Mammary epithelial cell (primary cell): ENCODE measurements at regions of chr4 and their contacts with region 1.

Region 1: GRCh38 chr4:15893962-15894361 is 44.6 kb downstream of the FGFBP1 start:
- DNase-seq: peak; percentile 99
- H3K4me3 ChIP-seq: no peak overlapping the region
- H3K27ac ChIP-seq: peak overlapping the region; percentile 99
- H3K4me1 ChIP-seq: peaks cover 43% of the 10 kb centered on the region
- H3K27me3 ChIP-seq: no peaks in the 10 kb centered on the region
- CTCF ChIP-seq: no peak

Region 2: GRCh38 chr4:15231265-15232091 is 662.5 kb before region 1 on chr4:
- CTCF ChIA-PET with region 1: interaction called, 18 read pairs
- dilution Hi-C with region 1: no loop called
- in situ Hi-C with region 1: no loop called
- intact Hi-C with region 1: no loop called
- DNase-seq: peak; percentile 68
- H3K4me3 ChIP-seq: no peak overlapping the region
- H3K27ac ChIP-seq: no peak overlapping the region
- H3K4me1 ChIP-seq: peaks cover 30% of the 10 kb centered on the region
- H3K27me3 ChIP-seq: peaks cover 2% of the 10 kb centered on the region
- CTCF ChIP-seq: peak; percentile 69 to 76

Region 3: DNA sequence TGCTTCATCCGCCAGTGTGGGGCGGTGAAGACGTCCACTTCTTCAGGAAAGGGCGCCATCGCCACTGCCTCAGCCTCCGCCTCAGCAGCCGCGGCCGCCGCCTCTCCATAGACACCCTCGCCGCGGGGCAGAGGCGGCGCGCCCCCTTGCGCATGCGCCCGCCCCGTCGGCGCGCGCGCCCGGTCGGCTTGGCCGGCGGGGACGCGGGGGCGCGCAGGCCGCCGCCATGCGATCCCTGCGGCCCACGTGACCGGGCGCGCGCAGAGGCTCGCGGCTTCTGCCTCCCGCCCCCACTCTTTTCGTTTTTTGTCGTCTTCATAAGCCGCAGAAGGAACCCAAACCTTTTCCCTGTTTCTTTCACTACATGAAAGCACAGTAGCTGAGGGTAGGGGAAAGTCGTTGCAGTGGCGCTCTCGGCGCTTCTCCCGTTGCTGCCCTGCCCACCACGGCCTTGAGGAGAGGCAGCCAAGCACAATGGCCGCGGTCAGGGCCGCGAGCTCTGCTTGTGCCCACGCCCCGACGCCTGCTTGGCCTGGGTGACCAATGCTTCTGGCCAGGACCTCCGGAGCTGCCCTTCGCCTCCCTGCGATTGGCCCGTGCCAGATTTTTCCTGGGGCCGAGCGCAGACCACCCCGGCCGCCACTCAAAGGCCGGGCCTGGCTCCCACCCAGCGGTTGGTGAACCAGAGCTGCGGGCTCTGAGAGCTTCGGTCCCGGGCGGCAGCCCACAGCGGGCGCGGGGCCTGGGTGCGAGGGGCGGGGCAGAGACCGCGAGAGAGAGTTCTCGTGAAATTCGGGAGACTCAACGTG is 238.5 kb before region 1 on chr4 and contains the start of gene FBXL5:
- CTCF ChIA-PET with region 1: no interaction called
- dilution Hi-C with region 1: no loop called
- in situ Hi-C with region 1: no loop called
- intact Hi-C with region 1: loop called (anchors 10 kb)
- DNase-seq: peak; percentile 82
- H3K4me3 ChIP-seq: peak within 1 kb of the TSS; percentile 82 to 93 (median 86)
- H3K27ac ChIP-seq: peak within 1 kb of the TSS; percentile 88
- H3K4me1 ChIP-seq: peaks cover 27% of the 10 kb centered on the region
- H3K27me3 ChIP-seq: no peaks in the 10 kb centered on the region
- CTCF ChIP-seq: no peak
- total RNA-seq, gene FBXL5: 72.1 to 109 TPM

Region 4: GRCh38 chr4:15906024-15906443 is 12.1 kb after region 1 on chr4:
- CTCF ChIA-PET with region 1: no interaction called
- dilution Hi-C with region 1: no loop called
- in situ Hi-C with region 1: no loop called
- intact Hi-C with region 1: loop called (anchors 1 kb)
- DNase-seq: peak; percentile 100
- H3K4me3 ChIP-seq: no peak overlapping the region
- H3K27ac ChIP-seq: peak overlapping the region; percentile 99
- H3K4me1 ChIP-seq: peaks cover 26% of the 10 kb centered on the region
- H3K27me3 ChIP-seq: no peaks in the 10 kb centered on the region
- CTCF ChIP-seq: peak in 1 of 2 donors; percentile 9

Region 5: GRCh38 chr4:15913631-15913970 is 19.6 kb after region 1 on chr4:
- CTCF ChIA-PET with region 1: no interaction called
- dilution Hi-C with region 1: no loop called
- in situ Hi-C with region 1: no loop called
- intact Hi-C with region 1: loop called (anchors 1 kb)
- DNase-seq: peak; percentile 99
- H3K4me3 ChIP-seq: no peak overlapping the region
- H3K27ac ChIP-seq: peak overlapping the region; percentile 100
- H3K4me1 ChIP-seq: peaks cover 65% of the 10 kb centered on the region
- H3K27me3 ChIP-seq: no peaks in the 10 kb centered on the region
- CTCF ChIP-seq: no peak

Region 6: GRCh38 chr4:15920723-15921591 is 27.0 kb after region 1 on chr4:
- CTCF ChIA-PET with region 1: no interaction called
- dilution Hi-C with region 1: no loop called
- in situ Hi-C with region 1: no loop called
- intact Hi-C with region 1: loop called (anchors 1 kb)
- DNase-seq: peak; percentile 93
- H3K4me3 ChIP-seq: no peak overlapping the region
- H3K27ac ChIP-seq: peak overlapping the region; percentile 89
- H3K4me1 ChIP-seq: peaks cover 42% of the 10 kb centered on the region
- H3K27me3 ChIP-seq: no peaks in the 10 kb centered on the region
- CTCF ChIP-seq: no peak

Region 7: DNA sequence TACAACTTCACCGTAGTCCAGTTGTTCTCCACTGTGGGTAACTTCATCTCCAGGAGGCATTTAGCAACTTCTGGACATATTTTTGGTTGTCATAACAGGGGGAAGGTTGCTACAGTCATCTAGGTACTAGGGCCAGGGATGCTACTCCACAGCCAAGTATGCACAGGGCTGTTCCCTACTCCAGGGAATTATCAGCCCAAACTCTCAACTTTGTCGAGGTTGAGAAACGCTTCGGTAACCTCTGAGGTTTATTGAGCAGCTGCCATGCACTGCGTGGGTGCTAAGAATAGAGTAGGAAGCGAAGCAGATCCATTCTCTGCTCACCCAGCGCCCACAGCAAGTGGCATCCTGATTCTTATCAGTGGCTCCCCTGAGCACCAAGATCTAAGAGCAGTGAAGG is 36.4 kb after region 1 on chr4:
- CTCF ChIA-PET with region 1: no interaction called
- dilution Hi-C with region 1: no loop called
- in situ Hi-C with region 1: loop called in 1 of 2 experiments (anchors 5 kb)
- intact Hi-C with region 1: no loop called
- DNase-seq: no peak
- H3K4me3 ChIP-seq: no peak overlapping the region
- H3K27ac ChIP-seq: no peak overlapping the region
- H3K4me1 ChIP-seq: peaks cover 3% of the 10 kb centered on the region
- H3K27me3 ChIP-seq: no peaks in the 10 kb centered on the region
- CTCF ChIP-seq: no peak